Prostate gland (tissue), 2 donors: ENCODE measurements at regions of chr2 and their contacts with region 1.

Region 1: GRCh38 chr2:31318361-31319336 is 84.7 kb downstream of the EHD3 start:
- DNase-seq: no peak
- H3K4me3 ChIP-seq: no peak overlapping the region
- H3K27ac ChIP-seq: no peak overlapping the region
- H3K4me1 ChIP-seq: peaks cover 2% of the 10 kb centered on the region
- H3K27me3 ChIP-seq: no peaks in the 10 kb centered on the region
- CTCF ChIP-seq: no peak
- POLR2A ChIP-seq: no peak

Region 2: DNA sequence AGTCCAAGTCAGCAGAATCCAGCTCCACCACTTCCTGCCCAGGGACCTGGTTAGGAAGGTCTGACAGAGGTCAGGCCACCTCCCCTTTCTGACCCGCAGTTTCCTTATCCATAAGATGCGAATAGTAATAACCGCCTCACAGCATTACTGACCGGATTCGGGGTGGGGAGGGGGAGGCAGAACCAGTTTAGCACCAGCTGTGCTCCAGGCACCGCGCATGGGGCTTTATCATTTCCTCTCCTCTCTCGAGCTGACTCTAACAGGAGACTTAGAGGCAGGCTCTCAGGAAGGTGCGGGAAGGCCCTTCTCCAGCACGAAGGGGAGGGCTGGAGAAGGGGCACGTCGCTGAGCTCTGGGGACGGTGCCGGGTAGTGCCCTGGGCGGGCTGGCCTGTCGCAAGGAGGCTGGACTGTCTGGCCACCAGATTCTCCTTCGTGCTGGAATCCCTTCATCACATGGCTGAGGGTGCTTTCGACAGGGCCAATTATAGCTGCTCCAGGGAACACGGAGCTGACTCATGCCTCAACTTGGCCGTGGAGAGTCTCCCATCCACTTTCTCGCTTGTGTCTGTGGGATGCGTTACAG is 79.0 kb before region 1 on chr2:
- intact Hi-C with region 1: loop called (anchors 5 kb)
- DNase-seq: no peak
- H3K4me3 ChIP-seq: no peak overlapping the region
- H3K27ac ChIP-seq: peak overlapping the region; percentile 30 to 54
- H3K4me1 ChIP-seq: no peaks in the 10 kb centered on the region
- H3K27me3 ChIP-seq: no peaks in the 10 kb centered on the region
- CTCF ChIP-seq: no peak
- POLR2A ChIP-seq: no peak

Region 3: DNA sequence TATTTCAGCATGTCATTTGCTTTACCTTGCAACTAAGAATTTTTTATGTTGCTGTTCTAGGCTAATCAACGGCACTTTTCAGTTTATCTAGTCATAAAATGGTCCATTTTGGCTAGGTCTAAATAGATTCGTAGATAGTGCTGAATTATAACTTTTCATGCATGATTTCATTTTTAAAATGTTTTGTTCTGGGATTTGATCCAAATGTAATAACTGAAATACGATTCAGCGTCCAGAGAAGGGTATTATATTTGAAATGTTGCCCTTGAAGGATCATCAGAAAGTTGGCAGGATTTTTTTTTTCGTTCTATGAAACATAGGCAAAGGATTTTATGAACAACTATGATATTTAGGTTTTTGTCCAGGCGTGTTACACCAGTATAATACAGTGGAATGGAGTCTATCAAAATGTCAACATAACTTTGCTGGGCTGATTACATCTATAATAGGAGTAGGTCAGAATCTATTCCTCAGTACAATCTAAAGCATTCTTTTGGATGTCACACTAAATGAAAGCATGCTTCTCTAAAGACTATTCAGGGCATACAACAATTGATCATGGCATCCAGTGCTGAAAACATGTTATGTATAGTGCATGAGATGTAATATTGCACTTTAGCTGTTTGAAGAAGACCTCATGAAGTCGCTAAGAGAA is 1334.0 kb after region 1 on chr2:
- intact Hi-C with region 1: no loop called
- DNase-seq: no peak
- H3K4me3 ChIP-seq: no peak overlapping the region
- H3K27ac ChIP-seq: no peak overlapping the region
- H3K4me1 ChIP-seq: no peaks in the 10 kb centered on the region
- H3K27me3 ChIP-seq: no peaks in the 10 kb centered on the region
- CTCF ChIP-seq: no peak
- POLR2A ChIP-seq: no peak